ENCODE measurements at regions of chr7 and their contacts with region 1.

Region 1: GRCh38 chr7:35624299-35625186 is 70.4 kb downstream of the HERPUD2 start:
- DNase-seq: peak; percentile 34
- H3K4me3 Mint-ChIP-seq: no peak overlapping the region
- H3K27ac Mint-ChIP-seq: no peak overlapping the region
- H3K4me1 Mint-ChIP-seq: no peaks in the 10 kb centered on the region
- H3K27me3 Mint-ChIP-seq: no peaks in the 10 kb centered on the region

Region 2: GRCh38 chr7:35605760-35606159 is 18.8 kb before region 1 on chr7:
- CTCF ChIA-PET with region 1: interaction called, 11 read pairs
- POLR2A ChIA-PET with region 1: no interaction called
- DNase-seq: no peak
- H3K4me3 Mint-ChIP-seq: no peak overlapping the region
- H3K27ac Mint-ChIP-seq: no peak overlapping the region
- H3K4me1 Mint-ChIP-seq: no peaks in the 10 kb centered on the region
- H3K27me3 Mint-ChIP-seq: no peaks in the 10 kb centered on the region

Region 3: DNA sequence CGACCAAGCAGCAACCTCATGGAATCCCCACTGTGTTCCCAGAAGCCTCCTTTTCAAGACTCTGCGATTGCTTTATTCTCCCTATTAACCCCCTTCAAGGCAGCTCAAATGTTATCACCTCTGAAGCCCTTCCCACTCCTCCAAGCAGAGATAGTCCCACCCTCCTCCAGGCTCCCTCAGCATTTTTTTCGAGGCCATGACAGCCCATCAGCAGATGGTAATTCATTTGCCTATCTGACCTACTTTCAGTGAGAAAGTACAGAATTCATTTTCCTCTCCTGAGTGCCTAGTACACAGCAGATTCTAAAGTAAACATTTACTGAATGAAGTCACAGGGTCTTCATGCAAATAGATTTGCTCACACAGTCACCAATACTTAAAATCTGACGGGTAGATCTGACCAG is 22.6 kb after region 1 on chr7:
- CTCF ChIA-PET with region 1: interaction called, 12 read pairs
- POLR2A ChIA-PET with region 1: no interaction called
- DNase-seq: no peak
- H3K4me3 Mint-ChIP-seq: no peak overlapping the region
- H3K27ac Mint-ChIP-seq: peak overlapping the region; percentile 0
- H3K4me1 Mint-ChIP-seq: peaks cover 43% of the 10 kb centered on the region
- H3K27me3 Mint-ChIP-seq: no peaks in the 10 kb centered on the region